Activated T-helper 2 cell treated with anti-CD3 and anti-CD28 coated beads, Interferon-gamma antibody, Interleukin-2, Interleukin-4, amounts not matched to agents 10 μg/mL and 5 μg/mL and 100 μg/mL, durations not matched to agents 14 hours and 24 hours and 36 hours (primary cell): ENCODE measurements at regions of chr20 and their contacts with region 1.

Region 1: DNA sequence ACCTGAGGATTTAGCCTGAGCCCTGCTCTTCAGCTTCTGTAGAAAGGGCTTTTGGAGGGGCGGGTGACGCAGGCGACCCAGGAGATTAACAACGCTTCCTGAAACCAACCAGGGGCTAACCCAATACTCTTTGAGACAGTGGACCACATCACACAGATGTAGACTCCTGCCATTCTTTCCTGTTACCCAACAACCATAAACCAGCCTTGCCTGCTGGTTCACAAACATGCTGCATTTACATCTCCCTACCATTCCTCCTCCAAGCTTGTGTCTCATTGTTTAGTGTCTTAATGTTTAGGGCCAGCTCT is 28.3 kb downstream of the PPP1R16B start:
- DNase-seq: no peak
- H3K4me3 Mint-ChIP-seq: peak overlapping the region; percentile 42
- H3K27ac Mint-ChIP-seq: peak overlapping the region; percentile 87
- H3K4me1 Mint-ChIP-seq: peaks cover 65% of the 10 kb centered on the region
- H3K27me3 Mint-ChIP-seq: no peaks in the 10 kb centered on the region

Region 2: DNA sequence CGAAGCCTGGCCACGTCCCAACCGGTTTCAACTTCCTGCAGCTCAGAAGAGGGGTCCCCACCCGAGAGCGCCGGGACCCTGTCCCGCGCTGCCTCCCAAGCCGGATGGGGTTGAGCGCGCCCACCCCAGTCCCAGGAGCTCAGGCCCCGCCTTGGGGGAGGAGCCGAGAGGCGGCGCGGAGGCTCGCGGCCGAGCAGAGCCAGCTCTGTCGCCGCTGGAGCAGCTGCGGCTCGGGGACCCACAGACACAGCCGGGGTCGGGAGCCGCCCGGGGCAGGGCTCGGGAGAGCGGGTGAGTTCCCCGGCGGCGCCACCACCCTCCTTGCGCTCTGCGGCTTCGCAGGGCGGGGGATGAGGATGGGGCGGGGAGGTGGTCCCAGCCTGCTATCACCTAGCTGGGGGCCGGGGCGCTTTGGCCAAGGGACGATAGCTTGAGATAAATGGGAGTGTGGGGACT is 28.3 kb before region 1 on chr20 and contains the start of gene PPP1R16B:
- intact Hi-C with region 1: loop called (anchors 2 kb)
- DNase-seq: peak; percentile 78
- H3K4me3 Mint-ChIP-seq: peak within 1 kb of the TSS; percentile 91
- H3K27ac Mint-ChIP-seq: peak within 1 kb of the TSS; percentile 98
- H3K4me1 Mint-ChIP-seq: peaks cover 48% of the 10 kb centered on the region
- H3K27me3 Mint-ChIP-seq: no peaks in the 10 kb centered on the region
- total RNA-seq, gene PPP1R16B: 109 and 111 TPM in 2 replicates